ENCODE measurements at regions of chr1 and their contacts with region 1.

Region 1: GRCh38 chr1:169546087-169546995 is 39.9 kb downstream of the F5 start:
- DNase-seq: peak; percentile 66
- ATAC-seq: peak; percentile 81
- H3K4me3 ChIP-seq: no peak overlapping the region
- H3K27ac ChIP-seq: peak overlapping the region; percentile 23
- H3K4me1 ChIP-seq: peaks cover 14% of the 10 kb centered on the region
- H3K27me3 ChIP-seq: no peaks in the 10 kb centered on the region
- CTCF ChIP-seq: peak; percentile 83
- EP300 ChIP-seq: peak in 1 of 2 experiments; percentile 45; a peak in 1 of 4 replicates
- POLR2A ChIP-seq: no peak
- RAD21 ChIP-seq: peak; percentile 36; the same call in 1 of the 2 replicates

Region 2: DNA sequence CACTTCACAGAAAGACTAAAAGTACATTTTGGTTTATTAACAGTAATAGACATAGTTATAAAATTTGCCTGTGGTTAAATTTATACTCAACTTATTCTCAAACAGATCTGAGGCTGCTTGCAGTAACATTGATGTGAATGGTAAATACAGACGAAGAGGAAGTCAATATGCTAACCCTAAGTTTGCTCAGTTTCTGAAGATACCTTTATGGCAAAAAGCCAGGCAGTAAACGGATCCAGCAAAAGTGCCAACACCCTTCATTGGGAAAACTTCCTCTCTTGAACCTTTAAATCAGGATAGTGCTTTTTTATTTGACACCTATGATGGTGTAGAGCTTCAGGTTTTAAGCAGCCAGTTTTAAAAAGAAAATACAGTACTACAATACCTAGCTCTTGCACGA is 102.4 kb before region 1 on chr1:
- CTCF ChIA-PET with region 1: no interaction called
- POLR2A ChIA-PET with region 1: no interaction called
- in situ Hi-C with region 1: no loop called
- intact Hi-C with region 1: no loop called
- DNase-seq: no peak
- ATAC-seq: no peak
- H3K4me3 ChIP-seq: no peak overlapping the region
- H3K27ac ChIP-seq: no peak overlapping the region
- H3K4me1 ChIP-seq: no peaks in the 10 kb centered on the region
- H3K27me3 ChIP-seq: no peaks in the 10 kb centered on the region
- CTCF ChIP-seq: no peak
- EP300 ChIP-seq: no peak
- POLR2A ChIP-seq: no peak
- RAD21 ChIP-seq: no peak

Region 3: DNA sequence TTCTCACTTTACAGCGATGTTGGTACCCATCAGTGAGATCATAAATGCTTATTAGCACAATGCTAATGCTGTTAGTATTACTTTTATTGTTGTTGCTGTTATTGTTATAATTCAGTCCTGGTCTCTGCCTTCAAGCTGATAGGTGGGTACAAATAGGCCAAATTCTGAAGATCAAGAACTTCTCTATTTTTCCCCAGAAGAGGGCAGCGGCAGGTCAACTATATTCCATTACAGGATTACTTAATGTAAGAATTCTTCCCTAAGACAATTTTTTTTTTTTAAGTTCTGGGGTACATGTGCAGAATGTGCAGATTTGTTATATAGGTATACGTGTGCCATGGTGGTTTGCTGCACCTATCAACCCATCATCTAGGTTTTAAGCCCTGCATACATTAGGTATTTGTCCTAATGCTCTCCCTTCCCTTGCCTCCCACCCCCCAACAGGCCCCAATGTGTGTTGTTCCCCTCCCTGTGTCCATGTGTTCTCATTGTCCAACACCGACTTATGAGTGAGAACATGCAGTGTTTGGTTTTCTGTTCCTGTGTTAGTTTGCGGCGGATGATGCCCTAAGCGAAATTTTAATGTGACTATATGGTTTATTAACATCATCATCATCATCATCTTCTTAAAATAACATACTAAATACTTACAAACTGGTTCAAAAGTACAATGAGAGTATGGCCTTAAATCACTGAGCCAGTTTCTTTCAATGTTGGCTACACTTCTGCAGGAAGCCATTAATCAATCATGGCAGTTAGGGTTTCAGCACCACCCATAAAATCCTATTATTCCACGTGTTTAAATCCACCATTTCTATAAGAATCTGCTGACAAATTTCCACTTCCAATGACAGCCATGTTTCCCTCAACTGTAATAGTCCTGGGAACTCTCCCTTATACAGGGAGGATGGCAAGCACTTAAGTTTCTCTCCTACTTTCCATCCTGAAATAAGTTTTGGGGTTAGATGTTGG is 79.8 kb before region 1 on chr1:
- CTCF ChIA-PET with region 1: interaction called, 18 read pairs
- POLR2A ChIA-PET with region 1: no interaction called
- in situ Hi-C with region 1: no loop called
- intact Hi-C with region 1: loop called (anchors 1 kb)
- DNase-seq: peak; percentile 24
- ATAC-seq: peak; percentile 69
- H3K4me3 ChIP-seq: no peak overlapping the region
- H3K27ac ChIP-seq: no peak overlapping the region
- H3K4me1 ChIP-seq: no peaks in the 10 kb centered on the region
- H3K27me3 ChIP-seq: no peaks in the 10 kb centered on the region
- CTCF ChIP-seq: peak; percentile 43
- EP300 ChIP-seq: no peak
- POLR2A ChIP-seq: no peak
- RAD21 ChIP-seq: peak; percentile 25; the same call in 1 of the 2 replicates

Region 4: DNA sequence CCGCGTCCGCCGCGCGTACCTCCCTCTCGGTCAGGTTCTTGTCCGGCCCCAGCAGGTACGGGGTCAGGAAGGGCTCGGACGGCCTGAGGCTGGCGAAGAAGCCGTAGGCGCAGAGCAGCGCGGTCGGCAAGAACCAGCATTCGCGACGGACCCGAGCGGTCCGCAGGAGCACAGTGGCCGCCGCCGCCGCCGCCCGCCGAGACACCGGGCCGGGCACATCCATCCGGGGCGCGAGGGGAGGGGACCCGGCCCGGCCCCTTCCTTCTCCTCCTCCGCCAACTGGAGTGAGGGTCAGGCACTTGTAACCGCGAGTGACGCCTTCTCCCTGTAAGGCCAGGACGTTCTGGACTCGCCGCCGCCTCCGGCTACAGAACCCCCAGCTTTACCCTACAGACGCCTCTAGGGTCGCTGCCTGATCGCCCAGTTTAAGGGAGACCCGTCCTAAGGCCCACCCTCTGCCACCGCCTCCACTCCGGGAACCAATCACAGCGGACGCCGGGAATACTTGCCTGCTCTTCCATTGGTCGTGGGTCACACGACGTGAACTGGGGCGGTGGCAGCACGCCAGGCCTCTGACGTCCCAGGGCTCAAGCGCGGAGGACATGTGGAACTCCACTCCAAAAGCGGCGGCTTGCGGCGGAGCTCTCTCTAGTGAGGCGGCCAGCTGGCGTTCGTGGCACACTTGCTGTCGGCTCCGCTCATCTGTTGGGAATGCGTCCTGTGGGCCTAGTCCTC is 60.6 kb before region 1 on chr1 and contains the start of gene SLC19A2:
- CTCF ChIA-PET with region 1: interaction called, 3 read pairs
- POLR2A ChIA-PET with region 1: no interaction called
- in situ Hi-C with region 1: no loop called
- intact Hi-C with region 1: loop called (anchors 1 kb)
- DNase-seq: peak; percentile 98
- ATAC-seq: peak; percentile 98
- H3K4me3 ChIP-seq: peak within 1 kb of the TSS; percentile 74 to 87 (median 81)
- H3K27ac ChIP-seq: peak within 1 kb of the TSS; percentile 95
- H3K4me1 ChIP-seq: peaks cover 62% of the 10 kb centered on the region
- H3K27me3 ChIP-seq: no peaks in the 10 kb centered on the region; a peak in 1 of 5 replicates
- CTCF ChIP-seq: peak; percentile 51
- EP300 ChIP-seq: peak; percentile 11 to 43; a peak in 1 of 4 replicates
- POLR2A ChIP-seq: peak; percentile 95 to 96
- RAD21 ChIP-seq: peak; percentile 11; the same call in 1 of the 2 replicates
- total RNA-seq, gene SLC19A2: 19.1 and 30.4 TPM in 2 replicates

Region 5: GRCh38 chr1:169711469-169712281 is 165.3 kb after region 1 on chr1 and contains the start of gene SELL:
- CTCF ChIA-PET with region 1: interaction called, 15 read pairs
- POLR2A ChIA-PET with region 1: no interaction called
- in situ Hi-C with region 1: no loop called
- intact Hi-C with region 1: loop called (anchors 1 kb)
- DNase-seq: peak; percentile 71
- ATAC-seq: peak; percentile 99
- H3K4me3 ChIP-seq: peak within 1 kb of the TSS; percentile 23 to 43 (median 39); a peak in 4 of 6 replicates
- H3K27ac ChIP-seq: no peak within 1 kb of the TSS
- H3K4me1 ChIP-seq: peaks cover 10% of the 10 kb centered on the region
- H3K27me3 ChIP-seq: no peaks in the 10 kb centered on the region; a peak in 1 of 5 replicates
- CTCF ChIP-seq: peak; percentile 80
- EP300 ChIP-seq: no peak
- POLR2A ChIP-seq: no peak
- RAD21 ChIP-seq: peak; percentile 58
- total RNA-seq, gene SELL: 0.13 and 0.32 TPM in 2 replicates

Region 6: DNA sequence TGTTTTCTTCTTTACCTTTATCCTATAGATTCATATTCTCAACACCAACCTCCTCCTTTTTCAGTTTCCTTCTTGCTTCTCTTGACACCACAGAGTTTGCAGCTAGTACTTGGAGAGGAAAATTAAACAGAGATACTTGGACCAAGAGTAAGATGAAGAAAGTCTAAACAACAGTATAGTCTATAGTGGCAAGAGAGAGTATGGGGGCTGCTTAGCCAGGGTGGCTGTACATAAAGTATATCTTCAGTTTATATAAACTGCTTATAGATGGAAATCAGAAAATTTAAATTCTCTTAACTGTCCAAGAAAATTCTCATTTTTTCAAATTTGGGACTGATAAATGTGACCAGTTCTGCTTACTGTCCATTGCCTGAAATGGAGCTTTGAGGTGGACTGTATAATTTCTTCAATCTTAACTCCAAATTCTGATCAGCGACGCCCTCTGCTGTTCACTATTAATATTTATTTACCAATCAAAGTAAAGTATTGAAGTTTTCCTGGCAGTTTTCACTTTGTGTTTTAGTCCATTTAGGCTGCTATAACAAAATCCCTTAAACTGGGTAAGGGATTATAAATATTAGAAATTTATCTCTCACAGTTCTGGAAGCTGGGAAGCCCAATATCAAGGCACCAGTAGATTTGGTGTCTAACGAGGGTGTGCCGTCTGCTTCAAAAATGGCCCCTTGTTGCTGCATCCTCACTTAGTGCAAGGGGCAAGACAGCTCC is 263.2 kb after region 1 on chr1:
- CTCF ChIA-PET with region 1: interaction called, 4 read pairs
- POLR2A ChIA-PET with region 1: no interaction called
- in situ Hi-C with region 1: no loop called
- intact Hi-C with region 1: loop called (anchors 1 kb)
- DNase-seq: peak; percentile 29
- ATAC-seq: peak; percentile 53; the same call in 2 of the 3 replicates
- H3K4me3 ChIP-seq: no peak overlapping the region
- H3K27ac ChIP-seq: no peak overlapping the region
- H3K4me1 ChIP-seq: no peaks in the 10 kb centered on the region
- H3K27me3 ChIP-seq: no peaks in the 10 kb centered on the region
- CTCF ChIP-seq: peak; percentile 56
- EP300 ChIP-seq: no peak
- POLR2A ChIP-seq: no peak
- RAD21 ChIP-seq: 0 out of 2 replicates have a peak, but pooled peaks have one; percentile 25